ENCODE measurements at regions of chr15 and their contacts with region 1.

Region 1: GRCh38 chr15:75921729-75922703 is 18.3 kb downstream of the FBXO22 start:
- DNase-seq: peak; percentile 68
- H3K4me3 ChIP-seq: no peak overlapping the region
- H3K27ac ChIP-seq: no peak overlapping the region
- H3K4me1 ChIP-seq: no peaks in the 10 kb centered on the region
- H3K27me3 ChIP-seq: no peaks in the 10 kb centered on the region
- CTCF ChIP-seq: peak; percentile 63

Region 2: DNA sequence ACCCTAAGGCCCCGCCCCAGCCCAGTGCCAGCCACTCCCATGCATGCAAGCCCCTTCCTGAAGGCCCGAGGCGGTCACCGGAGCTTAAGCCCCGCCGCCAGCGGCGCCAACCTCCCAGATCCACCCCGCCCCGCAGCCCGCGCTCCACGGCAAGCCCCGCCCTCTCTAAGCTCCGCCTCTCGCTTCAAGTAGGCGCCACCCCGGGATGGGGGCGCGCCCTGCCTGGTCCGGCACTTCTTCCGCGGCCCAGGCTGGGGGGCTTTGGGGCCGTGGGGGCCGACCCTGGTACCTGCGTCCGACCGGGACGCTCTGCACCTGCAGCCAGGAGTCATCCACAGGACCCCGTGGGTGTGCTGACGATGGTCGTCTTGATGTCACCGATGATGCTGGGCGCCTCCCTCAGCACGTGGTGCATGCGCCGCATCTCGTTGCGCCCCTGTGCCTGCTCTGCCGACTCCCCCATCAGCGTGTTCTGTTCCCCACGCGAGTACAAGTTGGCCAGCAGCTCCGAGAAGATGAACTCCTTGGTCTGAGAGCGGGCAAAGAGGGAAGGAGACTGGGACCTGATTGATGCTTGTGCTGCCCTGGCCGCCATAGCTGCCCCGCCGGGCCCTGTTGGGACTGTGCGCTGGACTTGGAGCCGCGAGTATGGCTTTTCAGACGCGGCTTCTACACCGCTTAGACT is 183.2 kb before region 1 on chr15:
- CTCF ChIA-PET with region 1: no interaction called
- POLR2A ChIA-PET with region 1: no interaction called
- intact Hi-C with region 1: loop called (anchors 10 kb)
- DNase-seq: peak; percentile 96
- H3K4me3 ChIP-seq: peak overlapping the region; percentile 86
- H3K27ac ChIP-seq: no peak overlapping the region
- H3K4me1 ChIP-seq: peaks cover 5% of the 10 kb centered on the region
- H3K27me3 ChIP-seq: no peaks in the 10 kb centered on the region
- CTCF ChIP-seq: no peak

Region 3: DNA sequence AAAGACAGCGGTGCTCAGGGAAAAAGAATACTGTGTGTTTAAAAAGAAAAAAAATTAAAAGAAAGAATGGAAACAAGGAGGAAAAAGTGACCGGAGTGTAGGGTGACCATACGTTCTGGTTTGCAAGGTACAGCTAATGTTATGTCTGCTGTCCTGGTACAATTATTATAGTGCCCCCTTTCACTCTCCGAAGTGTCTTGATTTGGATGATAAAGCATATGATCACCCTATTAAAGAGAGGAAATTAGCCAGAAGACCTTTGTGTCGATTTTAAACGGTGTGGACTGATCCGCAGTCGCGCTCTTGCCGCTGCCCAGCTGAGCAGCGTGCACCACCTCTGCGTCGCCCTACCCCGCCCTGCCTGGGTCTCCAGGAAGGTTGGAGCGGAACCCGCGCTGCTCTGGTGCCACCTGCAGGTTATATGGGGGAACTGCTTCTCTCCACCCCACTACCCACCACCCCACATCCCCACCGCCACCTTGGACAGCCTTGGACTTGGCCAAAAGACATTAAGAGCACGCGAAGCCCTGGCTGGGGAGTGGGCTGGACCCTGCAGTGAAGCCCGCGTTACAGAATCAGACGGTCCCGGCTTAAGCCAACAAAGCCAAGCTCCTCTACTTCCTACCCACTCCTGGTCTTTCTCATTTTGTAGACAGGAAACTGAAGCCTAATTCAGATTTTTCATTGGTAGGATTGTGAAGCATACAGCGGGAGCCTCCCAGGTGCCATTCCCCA is 120.0 kb before region 1 on chr15:
- CTCF ChIA-PET with region 1: no interaction called
- POLR2A ChIA-PET with region 1: no interaction called
- intact Hi-C with region 1: loop called (anchors 10 kb)
- DNase-seq: peak; percentile 83
- H3K4me3 ChIP-seq: peak overlapping the region; percentile 16
- H3K27ac ChIP-seq: no peak overlapping the region
- H3K4me1 ChIP-seq: no peaks in the 10 kb centered on the region
- H3K27me3 ChIP-seq: peaks cover 22% of the 10 kb centered on the region
- CTCF ChIP-seq: peak; percentile 86

Region 4: GRCh38 chr15:76235186-76235826 is 313.3 kb after region 1 on chr15:
- CTCF ChIA-PET with region 1: no interaction called
- POLR2A ChIA-PET with region 1: no interaction called
- intact Hi-C with region 1: no loop called
- DNase-seq: peak; percentile 78
- H3K4me3 ChIP-seq: no peak overlapping the region
- H3K27ac ChIP-seq: no peak overlapping the region
- H3K4me1 ChIP-seq: peaks cover 12% of the 10 kb centered on the region
- H3K27me3 ChIP-seq: no peaks in the 10 kb centered on the region
- CTCF ChIP-seq: peak; percentile 62